Activated CD4-positive, alpha-beta T cell treated with anti-CD3 and anti-CD28 coated beads for 36 hours (primary cell): ENCODE measurements at regions of chr6 and their contacts with region 1.

Region 1: GRCh38 chr6:98947351-98948292 is at the start of gene FBXL4:
- DNase-seq: peak; percentile 92
- ATAC-seq: peak; percentile 87
- H3K4me3 Mint-ChIP-seq: peak within 1 kb of the TSS; percentile 93
- H3K27ac Mint-ChIP-seq: peak within 1 kb of the TSS; percentile 97
- H3K4me1 Mint-ChIP-seq: peaks cover 30% of the 10 kb centered on the region
- H3K27me3 Mint-ChIP-seq: no peaks in the 10 kb centered on the region
- total RNA-seq, gene FBXL4: 16.2 to 16.5 TPM

Region 2: GRCh38 chr6:98834060-98835031 is 113.3 kb before region 1 on chr6 and contains the start of gene POU3F2:
- CTCF ChIA-PET with region 1: no interaction called
- POLR2A ChIA-PET with region 1: no interaction called
- intact Hi-C with region 1: loop called (anchors 1 to 5 kb)
- DNase-seq: peak; percentile 85
- ATAC-seq: peak; percentile 85
- H3K4me3 Mint-ChIP-seq: peak within 1 kb of the TSS; percentile 75
- H3K27ac Mint-ChIP-seq: no peak within 1 kb of the TSS
- H3K4me1 Mint-ChIP-seq: peaks cover 43% of the 10 kb centered on the region
- H3K27me3 Mint-ChIP-seq: peaks cover 64% of the 10 kb centered on the region
- total RNA-seq, gene POU3F2: not detected

Region 3: GRCh38 chr6:99119109-99120031 is 171.7 kb after region 1 on chr6:
- CTCF ChIA-PET with region 1: interaction called, 3 read pairs
- POLR2A ChIA-PET with region 1: no interaction called
- intact Hi-C with region 1: loop called in 1 of 2 experiments (anchors 1 kb)
- DNase-seq: peak; percentile 35
- ATAC-seq: peak; percentile 53
- H3K4me3 Mint-ChIP-seq: no peak overlapping the region
- H3K27ac Mint-ChIP-seq: no peak overlapping the region
- H3K4me1 Mint-ChIP-seq: peaks cover 2% of the 10 kb centered on the region
- H3K27me3 Mint-ChIP-seq: peaks cover 19% of the 10 kb centered on the region

Region 4: GRCh38 chr6:99393698-99394531 is 446.3 kb after region 1 on chr6 and contains the start of gene COQ3:
- CTCF ChIA-PET with region 1: no interaction called
- POLR2A ChIA-PET with region 1: no interaction called
- intact Hi-C with region 1: loop called in 1 of 2 experiments (anchors 10 kb)
- DNase-seq: peak; percentile 80
- ATAC-seq: peak; percentile 87
- H3K4me3 Mint-ChIP-seq: peak within 1 kb of the TSS; percentile 94
- H3K27ac Mint-ChIP-seq: peak within 1 kb of the TSS; percentile 84
- H3K4me1 Mint-ChIP-seq: peaks cover 14% of the 10 kb centered on the region
- H3K27me3 Mint-ChIP-seq: no peaks in the 10 kb centered on the region
- total RNA-seq, gene COQ3: 13.5 to 23.4 TPM

Region 5: DNA sequence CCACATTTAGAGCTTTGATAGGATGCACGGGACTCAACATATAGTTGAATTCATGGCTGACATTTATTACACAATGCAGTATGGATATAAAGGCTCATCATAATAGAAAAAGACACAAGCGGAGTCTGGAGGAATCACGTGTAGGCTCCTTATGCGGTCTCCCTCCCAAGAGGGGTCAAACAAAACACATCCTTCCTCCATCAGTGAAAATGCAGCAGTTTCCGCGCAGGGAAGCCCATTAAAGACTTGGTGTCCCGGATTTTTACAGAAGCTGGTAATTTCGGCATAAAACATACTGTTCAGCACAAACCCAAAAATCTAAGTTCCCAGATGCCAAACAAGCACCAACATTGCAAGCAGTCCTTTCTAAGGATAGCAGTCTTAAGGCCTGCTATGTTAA is 566.5 kb after region 1 on chr6:
- CTCF ChIA-PET with region 1: no interaction called
- POLR2A ChIA-PET with region 1: no interaction called
- intact Hi-C with region 1: loop called in 1 of 2 experiments (anchors 2 kb)
- DNase-seq: no peak
- ATAC-seq: no peak
- H3K4me3 Mint-ChIP-seq: peak overlapping the region; percentile 88
- H3K27ac Mint-ChIP-seq: no peak overlapping the region
- H3K4me1 Mint-ChIP-seq: peaks cover 29% of the 10 kb centered on the region
- H3K27me3 Mint-ChIP-seq: no peaks in the 10 kb centered on the region